H1 (cell line): ENCODE measurements at regions of chr2 and their contacts with region 1.

Region 1: DNA sequence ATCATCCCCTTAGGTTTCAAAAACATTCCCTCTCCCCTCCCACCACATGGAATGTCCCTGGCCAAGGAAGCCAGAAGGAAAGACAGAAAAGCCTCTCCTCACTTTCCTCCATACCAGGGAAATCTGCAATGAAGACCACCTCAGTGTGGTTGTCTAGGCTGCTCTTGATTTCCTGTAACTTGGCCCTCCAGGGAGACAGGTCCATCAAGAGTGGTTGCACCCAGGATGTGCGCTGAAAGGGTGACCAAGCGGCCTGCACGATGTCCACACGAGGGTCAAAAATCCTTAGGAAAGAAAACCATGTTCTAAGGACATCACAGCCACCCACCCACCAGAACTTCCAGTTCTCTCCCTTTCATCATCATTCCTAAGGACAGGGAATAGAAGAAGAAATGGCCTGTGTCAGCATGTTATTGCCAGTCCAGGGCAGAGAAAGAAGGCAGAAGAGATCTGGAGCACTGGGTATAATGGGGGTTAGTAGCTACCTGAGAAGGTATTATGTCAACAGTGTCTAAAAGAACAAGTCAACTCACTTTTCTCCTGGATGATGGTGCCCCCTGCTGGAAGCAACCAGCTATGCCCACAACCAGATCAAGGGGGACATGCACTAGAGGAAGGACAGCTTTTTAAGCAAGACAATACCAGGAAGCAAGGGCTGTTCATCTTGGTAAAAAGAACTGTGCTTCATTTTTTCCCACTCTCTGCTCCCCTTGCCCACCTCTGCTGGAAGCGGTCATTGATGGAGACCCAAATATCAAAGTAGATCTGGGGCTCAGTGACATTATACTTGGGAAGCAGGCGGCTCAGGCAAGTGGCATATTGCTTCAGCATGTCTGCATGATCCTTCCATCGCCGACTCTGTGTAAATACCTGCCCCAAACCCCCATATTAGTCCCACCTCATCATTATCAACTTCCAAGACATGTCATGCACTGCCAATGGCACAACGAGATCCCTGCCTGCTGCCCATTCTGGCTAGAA is 9.3 kb downstream of the GGCX start:
- DNase-seq: peak; percentile 60 to 93
- H3K4me3 ChIP-seq: no peak overlapping the region
- H3K27ac ChIP-seq: no peak overlapping the region
- H3K4me1 ChIP-seq: no peaks in the 10 kb centered on the region
- H3K27me3 ChIP-seq: no peaks in the 10 kb centered on the region
- CTCF ChIP-seq: peak; percentile 70 to 93 (median 93)
- EP300 ChIP-seq: no peak
- POLR2A ChIP-seq: no peak
- RAD21 ChIP-seq: peak; percentile 98

Region 2: DNA sequence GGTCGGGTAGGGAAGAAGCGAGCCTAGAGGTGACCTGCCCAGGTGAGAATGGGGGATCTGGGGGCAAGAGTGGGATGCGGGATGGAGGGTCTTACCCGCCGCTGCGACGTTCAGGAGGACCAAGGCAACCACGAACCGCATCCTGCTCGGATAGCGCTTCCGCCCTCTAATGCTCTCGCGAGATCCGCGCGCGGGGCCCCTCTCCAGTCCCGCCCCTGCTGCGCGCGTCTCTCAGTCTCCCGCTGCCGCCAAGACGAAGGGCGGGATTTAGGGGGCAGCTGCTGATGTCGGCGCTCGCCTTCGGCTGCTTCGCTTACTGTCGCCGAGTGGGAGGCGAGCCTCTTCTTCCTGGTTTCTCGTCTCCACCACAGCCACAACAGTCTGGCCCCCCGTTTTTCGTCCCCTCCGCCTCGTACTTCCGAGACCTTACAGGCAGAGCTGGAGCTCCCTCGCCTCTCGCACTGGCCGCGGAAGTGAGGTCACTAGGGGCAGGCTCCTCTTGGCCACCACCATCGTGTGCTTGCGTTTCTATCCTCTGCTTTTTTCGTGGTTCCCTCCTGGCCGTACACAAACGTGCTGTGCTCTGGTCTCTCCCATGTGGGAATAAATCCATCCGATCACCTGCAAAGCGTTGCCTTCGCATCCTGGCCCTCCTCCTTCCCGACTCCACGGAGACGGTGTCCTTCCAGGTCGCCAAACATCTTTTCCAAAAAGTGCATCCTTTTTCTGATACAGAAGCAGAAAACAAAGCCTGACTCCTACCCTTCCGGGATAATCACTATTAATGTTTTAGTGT is 224.0 kb before region 1 on chr2 and contains the start of gene TGOLN2:
- CTCF ChIA-PET with region 1: interaction called, 4 read pairs
- POLR2A ChIA-PET with region 1: interaction called, 11 read pairs
- DNase-seq: peak; percentile 58 to 94
- H3K4me3 ChIP-seq: peak within 1 kb of the TSS; percentile 61 to 96 (median 84)
- H3K27ac ChIP-seq: peak within 1 kb of the TSS; percentile 99
- H3K4me1 ChIP-seq: peaks cover 0 to 13% (median 7%) of the 10 kb centered on the region in 4 experiments; a peak in 6 of 7 replicates
- H3K27me3 ChIP-seq: no peaks in the 10 kb centered on the region; a peak in 1 of 7 replicates
- CTCF ChIP-seq: peak in 1 of 3 experiments; percentile 8; a peak in 2 of 4 replicates
- EP300 ChIP-seq: no peak
- POLR2A ChIP-seq: peak; percentile 99 to 100
- RAD21 ChIP-seq: no peak; a peak in 1 of 4 replicates
- total RNA-seq, gene TGOLN2: 36.3 and 38.9 TPM in 2 replicates

Region 3: GRCh38 chr2:85390941-85391669 is 160.9 kb before region 1 on chr2:
- CTCF ChIA-PET with region 1: interaction called, 102 read pairs
- POLR2A ChIA-PET with region 1: interaction called, 396 read pairs
- DNase-seq: peak; percentile 36 to 97
- H3K4me3 ChIP-seq: no peak overlapping the region
- H3K27ac ChIP-seq: no peak overlapping the region
- H3K4me1 ChIP-seq: peaks cover 0 to 6% (median 3%) of the 10 kb centered on the region in 4 experiments; a peak in 4 of 7 replicates
- H3K27me3 ChIP-seq: no peaks in the 10 kb centered on the region; a peak in 1 of 7 replicates
- CTCF ChIP-seq: peak; percentile 89 to 94 (median 94)
- EP300 ChIP-seq: no peak
- POLR2A ChIP-seq: no peak
- RAD21 ChIP-seq: peak; percentile 95 to 97

Region 4: DNA sequence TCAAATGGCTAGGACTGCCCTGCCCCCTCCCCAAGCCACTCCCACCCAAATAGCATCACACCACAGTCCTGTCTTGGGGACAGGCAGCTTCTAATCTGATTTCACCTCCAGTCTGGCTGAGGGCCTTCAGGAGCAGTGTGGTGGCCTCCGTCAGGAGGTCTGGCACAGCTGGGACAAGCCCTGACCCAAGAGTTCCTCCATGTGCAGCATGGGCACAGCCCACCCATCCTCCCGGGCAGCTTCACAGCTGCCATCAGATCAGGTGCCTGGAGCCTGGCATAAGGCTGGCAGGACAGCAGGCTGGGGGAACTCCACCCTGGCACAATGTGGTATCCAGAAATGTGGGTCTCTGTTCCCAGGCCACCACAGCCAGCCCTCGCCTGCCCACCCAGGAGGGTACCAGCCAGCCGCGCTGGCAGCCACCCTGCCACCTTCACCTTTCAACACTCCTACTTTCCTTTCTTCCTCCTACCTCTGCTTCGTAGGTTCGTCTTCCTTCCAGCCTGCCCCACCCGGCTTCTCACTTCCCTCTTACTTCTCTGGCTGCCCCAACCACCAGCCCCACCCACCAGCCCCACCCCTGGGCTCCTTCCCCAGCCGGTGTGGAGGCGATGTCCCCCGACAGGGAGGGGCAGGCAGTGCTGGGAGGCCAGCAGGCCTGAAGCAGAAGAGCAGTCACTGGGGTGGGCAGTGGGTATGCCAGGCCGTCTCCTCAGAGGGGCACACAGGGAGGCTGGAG is 142.0 kb before region 1 on chr2 and contains the start of gene CAPG:
- CTCF ChIA-PET with region 1: interaction called, 11 read pairs
- POLR2A ChIA-PET with region 1: interaction called, 1,889 read pairs
- DNase-seq: peak in 1 of 2 experiments; percentile 53
- H3K4me3 ChIP-seq: peak within 1 kb of the TSS in 1 of 4 experiments; percentile 28; a peak in 1 of 8 replicates
- H3K27ac ChIP-seq: no peak within 1 kb of the TSS
- H3K4me1 ChIP-seq: peaks cover 5 to 19% (median 15%) of the 10 kb centered on the region in 4 experiments
- H3K27me3 ChIP-seq: peaks cover 0 to 3% (median 1%) of the 10 kb centered on the region in 4 experiments; a peak in 1 of 7 replicates
- CTCF ChIP-seq: no peak
- EP300 ChIP-seq: no peak
- POLR2A ChIP-seq: no peak
- RAD21 ChIP-seq: no peak
- total RNA-seq, gene CAPG: 78.6 and 80.5 TPM in 2 replicates

Region 5: GRCh38 chr2:85468704-85469349 is 83.2 kb before region 1 on chr2:
- CTCF ChIA-PET with region 1: interaction called, 3 read pairs
- POLR2A ChIA-PET with region 1: interaction called, 11 read pairs
- DNase-seq: peak in 1 of 2 experiments; percentile 21
- H3K4me3 ChIP-seq: no peak overlapping the region
- H3K27ac ChIP-seq: no peak overlapping the region
- H3K4me1 ChIP-seq: peaks cover 0 to 8% (median 5%) of the 10 kb centered on the region in 4 experiments; a peak in 5 of 7 replicates
- H3K27me3 ChIP-seq: no peaks in the 10 kb centered on the region; a peak in 1 of 7 replicates
- CTCF ChIP-seq: no peak
- EP300 ChIP-seq: no peak
- POLR2A ChIP-seq: no peak
- RAD21 ChIP-seq: no peak; a peak in 1 of 4 replicates

Region 6: GRCh38 chr2:85644909-85645308 is 92.9 kb after region 1 on chr2:
- CTCF ChIA-PET with region 1: no interaction called
- POLR2A ChIA-PET with region 1: no interaction called
- DNase-seq: no peak
- H3K4me3 ChIP-seq: no peak overlapping the region
- H3K27ac ChIP-seq: no peak overlapping the region
- H3K4me1 ChIP-seq: no peaks in the 10 kb centered on the region
- H3K27me3 ChIP-seq: no peaks in the 10 kb centered on the region
- CTCF ChIP-seq: no peak
- EP300 ChIP-seq: no peak
- POLR2A ChIP-seq: no peak
- RAD21 ChIP-seq: no peak

Region 7: GRCh38 chr2:85707304-85707703 is 155.3 kb after region 1 on chr2:
- CTCF ChIA-PET with region 1: no interaction called
- POLR2A ChIA-PET with region 1: no interaction called
- DNase-seq: no peak
- H3K4me3 ChIP-seq: no peak overlapping the region
- H3K27ac ChIP-seq: no peak overlapping the region
- H3K4me1 ChIP-seq: peaks cover 0 to 4% (median 1%) of the 10 kb centered on the region in 4 experiments; a peak in 3 of 7 replicates
- H3K27me3 ChIP-seq: no peaks in the 10 kb centered on the region; a peak in 1 of 7 replicates
- CTCF ChIP-seq: peak; percentile 0 to 94 (median 72)
- EP300 ChIP-seq: no peak
- POLR2A ChIP-seq: no peak
- RAD21 ChIP-seq: peak; percentile 65 to 72